ENCODE measurements at regions of chr1 and their contacts with region 1.

Region 1: GRCh38 chr1:168637350-168637991 is 61.1 kb downstream of the XCL1 start:
- DNase-seq: peak; percentile 39
- H3K4me3 ChIP-seq: no peak overlapping the region
- H3K27ac ChIP-seq: peak overlapping the region; percentile 95
- H3K4me1 ChIP-seq: peaks cover 26% of the 10 kb centered on the region
- H3K27me3 ChIP-seq: no peaks in the 10 kb centered on the region
- CTCF ChIP-seq: peak; percentile 79 to 84

Region 2: GRCh38 chr1:168691541-168691940 is 54.1 kb after region 1 on chr1:
- CTCF ChIA-PET with region 1: no interaction called
- dilution Hi-C with region 1: no loop called
- in situ Hi-C with region 1: no loop called
- intact Hi-C with region 1: no loop called
- DNase-seq: no peak
- H3K4me3 ChIP-seq: no peak overlapping the region
- H3K27ac ChIP-seq: no peak overlapping the region
- H3K4me1 ChIP-seq: peaks cover 10% of the 10 kb centered on the region
- H3K27me3 ChIP-seq: no peaks in the 10 kb centered on the region
- CTCF ChIP-seq: no peak

Region 3: DNA sequence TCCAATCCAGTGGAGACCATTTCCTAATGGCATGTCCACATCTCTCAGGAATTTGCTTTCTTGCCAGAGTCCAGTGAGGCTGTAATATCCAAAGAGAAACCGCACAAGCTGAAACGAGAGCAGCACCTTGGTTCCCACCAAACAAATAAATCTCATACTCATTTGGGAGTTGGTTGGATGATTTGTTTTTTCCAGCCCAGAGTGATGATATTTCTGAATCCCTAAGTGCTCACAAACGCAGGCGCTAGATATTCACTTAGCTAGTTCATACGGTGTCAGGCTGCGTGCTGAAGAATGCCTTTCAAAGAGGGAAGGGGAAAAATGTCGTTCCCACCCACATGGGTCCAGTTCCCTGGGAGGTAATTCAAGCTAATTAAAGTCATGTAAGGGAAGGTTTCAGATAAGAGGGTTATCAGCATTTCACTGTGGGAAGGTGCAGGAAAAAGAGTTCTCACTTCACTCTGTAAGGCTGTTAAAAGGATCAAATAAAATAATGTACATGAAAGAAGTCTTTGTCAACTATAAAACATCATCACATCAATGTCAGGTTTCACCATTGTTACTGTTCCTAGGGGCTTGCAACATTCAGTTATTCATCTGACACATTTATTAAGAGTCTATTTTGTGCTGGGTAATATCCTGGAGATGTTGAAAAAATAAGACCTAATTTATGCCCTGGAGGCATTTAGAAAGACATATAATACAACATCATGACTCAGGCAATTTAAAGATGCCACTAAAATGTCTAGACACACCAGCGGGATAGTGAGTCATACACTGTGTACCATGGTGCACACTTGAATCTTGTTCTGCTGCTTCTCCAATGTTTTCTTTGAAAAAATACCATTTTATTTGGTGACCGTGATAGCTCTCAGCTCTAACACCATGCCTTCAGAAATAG is 72.2 kb after region 1 on chr1:
- CTCF ChIA-PET with region 1: no interaction called
- dilution Hi-C with region 1: loop called (anchors 5 kb)
- in situ Hi-C with region 1: no loop called
- intact Hi-C with region 1: loop called (anchors 2 kb)
- DNase-seq: peak; percentile 98
- H3K4me3 ChIP-seq: no peak overlapping the region
- H3K27ac ChIP-seq: peak overlapping the region; percentile 99
- H3K4me1 ChIP-seq: peaks cover 26% of the 10 kb centered on the region
- H3K27me3 ChIP-seq: no peaks in the 10 kb centered on the region
- CTCF ChIP-seq: peak in 1 of 2 donors; percentile 9

Region 4: DNA sequence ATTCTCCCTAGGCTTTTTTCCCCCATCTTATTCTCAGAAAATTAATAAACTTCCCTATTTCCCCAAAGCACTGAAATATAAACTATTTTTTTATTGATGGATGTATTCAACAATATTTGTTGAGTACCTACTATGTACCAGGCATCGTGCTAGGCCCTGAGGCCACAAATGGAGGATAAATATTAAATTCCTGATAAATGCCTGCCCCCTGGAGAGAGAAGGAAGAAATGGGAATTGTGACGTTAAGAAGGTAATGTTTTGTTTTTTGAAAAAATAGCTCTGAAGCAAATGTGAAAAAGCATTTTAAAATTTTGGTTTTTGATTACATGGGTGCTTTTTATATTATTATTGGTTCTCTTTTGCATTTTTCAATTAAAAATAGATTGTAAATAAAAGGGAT is 152.0 kb after region 1 on chr1:
- CTCF ChIA-PET with region 1: no interaction called
- dilution Hi-C with region 1: no loop called
- in situ Hi-C with region 1: no loop called
- intact Hi-C with region 1: loop called (anchors 2 kb)
- DNase-seq: no peak
- H3K4me3 ChIP-seq: no peak overlapping the region
- H3K27ac ChIP-seq: no peak overlapping the region
- H3K4me1 ChIP-seq: no peaks in the 10 kb centered on the region
- H3K27me3 ChIP-seq: no peaks in the 10 kb centered on the region
- CTCF ChIP-seq: peak in 1 of 2 donors; percentile 5

Region 5: DNA sequence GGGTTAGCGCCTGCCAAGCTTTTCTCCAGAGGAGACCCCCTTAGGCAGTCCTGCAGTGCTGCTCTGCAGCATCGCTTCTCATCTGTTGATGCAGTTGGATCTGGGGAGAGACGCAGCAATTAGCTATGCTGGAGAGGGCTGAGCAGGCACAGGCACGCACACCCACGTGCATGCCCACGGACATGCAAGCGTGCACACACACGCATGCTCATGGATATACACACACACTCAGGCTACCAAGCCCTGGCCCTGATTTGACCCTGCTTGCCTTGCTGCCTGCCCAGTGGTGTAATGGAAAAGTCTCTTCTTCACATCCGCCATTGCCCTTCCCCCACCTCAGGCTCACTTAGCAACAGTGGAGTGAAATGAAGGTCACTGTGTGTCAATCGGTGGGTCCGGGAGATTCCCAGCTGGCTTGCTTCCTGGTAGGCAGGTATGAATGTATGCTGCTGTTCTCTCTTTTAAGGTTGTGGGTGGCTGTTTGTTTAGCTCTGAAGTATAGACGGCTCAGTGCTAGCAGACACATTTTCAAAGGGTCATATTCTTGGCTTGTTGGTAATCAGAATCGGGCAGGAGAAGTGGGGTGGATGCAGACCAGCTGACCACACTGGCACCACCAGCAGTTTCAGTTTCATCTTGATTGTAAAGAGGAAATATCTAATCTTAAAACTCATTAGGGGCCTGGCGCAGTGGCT is 478.6 kb after region 1 on chr1:
- CTCF ChIA-PET with region 1: no interaction called
- dilution Hi-C with region 1: loop called (anchors 25 kb)
- in situ Hi-C with region 1: loop called (anchors 10 kb)
- intact Hi-C with region 1: no loop called
- DNase-seq: peak; percentile 90
- H3K4me3 ChIP-seq: no peak overlapping the region
- H3K27ac ChIP-seq: peak overlapping the region; percentile 58
- H3K4me1 ChIP-seq: peaks cover 67% of the 10 kb centered on the region
- H3K27me3 ChIP-seq: no peaks in the 10 kb centered on the region
- CTCF ChIP-seq: no peak

Region 6: GRCh38 chr1:169122976-169123375 is 485.5 kb after region 1 on chr1:
- CTCF ChIA-PET with region 1: no interaction called
- dilution Hi-C with region 1: loop called (anchors 25 kb)
- in situ Hi-C with region 1: loop called (anchors 10 kb)
- intact Hi-C with region 1: no loop called
- DNase-seq: no peak
- H3K4me3 ChIP-seq: no peak overlapping the region
- H3K27ac ChIP-seq: no peak overlapping the region
- H3K4me1 ChIP-seq: peaks cover 12% of the 10 kb centered on the region
- H3K27me3 ChIP-seq: no peaks in the 10 kb centered on the region
- CTCF ChIP-seq: no peak

Region 7: GRCh38 chr1:169133801-169134502 is 496.5 kb after region 1 on chr1:
- CTCF ChIA-PET with region 1: no interaction called
- dilution Hi-C with region 1: no loop called
- in situ Hi-C with region 1: loop called in 1 of 2 experiments (anchors 10 kb)
- intact Hi-C with region 1: loop called (anchors 2 kb)
- DNase-seq: no peak
- H3K4me3 ChIP-seq: no peak overlapping the region
- H3K27ac ChIP-seq: no peak overlapping the region
- H3K4me1 ChIP-seq: peaks cover 13% of the 10 kb centered on the region
- H3K27me3 ChIP-seq: no peaks in the 10 kb centered on the region
- CTCF ChIP-seq: peak; percentile 61 to 74

Region 8: DNA sequence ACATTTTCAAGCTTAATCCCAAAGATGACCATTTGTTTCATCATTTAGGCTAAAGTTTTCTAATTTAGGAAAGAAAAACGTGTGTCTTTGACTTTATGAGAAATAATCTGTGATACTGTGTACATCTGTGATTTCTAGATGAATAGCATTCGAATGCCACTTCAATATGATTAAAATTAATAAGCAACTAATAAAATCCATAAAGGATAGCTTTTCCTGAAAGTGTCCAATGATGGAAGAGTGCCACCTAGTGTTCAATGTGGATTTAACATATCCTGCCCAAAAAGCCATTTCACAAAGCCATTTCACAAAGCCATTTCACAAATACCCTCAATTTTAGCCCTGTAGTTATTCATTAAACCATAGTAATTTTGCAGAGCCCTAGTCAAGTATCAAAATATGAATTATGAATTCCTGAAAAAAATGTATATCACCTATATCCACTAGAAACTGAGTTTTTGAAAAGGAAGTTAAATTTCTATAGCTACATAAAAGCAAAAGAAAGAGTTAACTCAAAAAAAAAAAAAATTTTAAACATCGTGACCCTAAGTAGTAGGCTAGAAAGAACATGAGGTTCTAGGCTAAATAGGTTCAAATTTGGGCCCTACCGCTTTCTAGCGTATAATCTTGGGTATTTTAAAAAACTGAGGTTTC is 711.0 kb after region 1 on chr1:
- CTCF ChIA-PET with region 1: interaction called, 7 read pairs
- dilution Hi-C with region 1: no loop called
- in situ Hi-C with region 1: no loop called
- intact Hi-C with region 1: loop called (anchors 1 kb)
- DNase-seq: peak; percentile 32
- H3K4me3 ChIP-seq: no peak overlapping the region
- H3K27ac ChIP-seq: no peak overlapping the region
- H3K4me1 ChIP-seq: no peaks in the 10 kb centered on the region
- H3K27me3 ChIP-seq: no peaks in the 10 kb centered on the region
- CTCF ChIP-seq: peak; percentile 55 to 73

Measured in mammary epithelial cell (primary cell).